Sigmoid colon (tissue), 7 donors: ENCODE measurements at regions of chr17 and their contacts with region 1.

Region 1: GRCh38 chr17:50297407-50297865 is 23.2 kb downstream of the TMEM92 start:
- DNase-seq: peak; percentile 91
- H3K4me3 ChIP-seq: no peak overlapping the region
- H3K27ac ChIP-seq: no peak overlapping the region
- H3K4me1 ChIP-seq: peaks cover 0 to 3% (median 2%) of the 10 kb centered on the region in 4 donors
- H3K27me3 ChIP-seq: no peaks in the 10 kb centered on the region
- CTCF ChIP-seq: peak; percentile 95 to 98 (median 96)
- EP300 ChIP-seq: no peak
- POLR2A ChIP-seq: no peak

Region 2: DNA sequence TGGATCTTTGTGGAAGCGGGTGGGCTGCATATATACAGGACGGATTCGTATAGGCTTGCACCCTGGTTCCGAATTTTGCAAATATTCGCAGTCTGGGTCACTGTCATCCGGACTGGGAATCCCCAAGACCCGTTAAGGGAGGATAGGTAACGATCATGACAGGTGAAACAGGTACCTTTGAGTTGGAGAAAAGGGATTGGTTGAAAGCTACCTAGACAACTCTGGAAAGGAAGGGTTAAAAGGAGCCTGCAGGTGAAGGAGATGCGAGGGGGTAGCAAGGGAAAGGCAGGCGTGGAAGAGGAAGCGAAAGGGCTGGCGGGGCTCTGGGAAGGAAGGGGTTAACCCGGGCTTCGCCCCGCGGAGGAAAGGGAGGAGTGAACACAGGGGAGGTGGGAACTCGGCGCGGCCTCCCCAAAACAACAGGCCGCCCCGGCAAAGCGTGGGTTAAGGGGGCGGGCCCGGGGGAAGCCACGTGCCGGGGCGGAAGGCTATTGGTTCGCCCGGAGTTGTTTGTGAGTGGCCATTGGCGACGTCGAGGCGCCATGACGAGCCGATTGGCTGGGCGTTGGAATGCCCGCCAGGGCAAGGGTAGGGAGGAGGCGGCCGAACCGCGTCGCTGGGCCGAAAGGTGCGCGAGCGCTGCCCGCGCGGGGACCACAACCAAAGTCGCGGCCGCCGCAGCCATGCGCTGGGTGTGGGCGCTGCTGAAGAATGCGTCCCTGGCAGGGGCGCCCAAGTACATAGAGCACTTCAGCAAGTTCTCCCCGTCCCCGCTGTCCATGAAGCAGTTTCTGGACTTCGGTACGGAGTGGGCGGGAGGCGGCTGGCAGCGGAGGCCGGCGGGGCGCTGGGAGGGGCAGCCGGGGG is 202.4 kb before region 1 on chr17 and contains the start of gene PDK2:
- intact Hi-C with region 1: loop called (anchors 2 kb)
- DNase-seq: peak; percentile 99
- H3K4me3 ChIP-seq: peak within 1 kb of the TSS; percentile 91 to 97 (median 94)
- H3K27ac ChIP-seq: peak within 1 kb of the TSS; percentile 91 to 96 (median 92)
- H3K4me1 ChIP-seq: peaks cover 0 to 38% (median 26%) of the 10 kb centered on the region in 4 donors
- H3K27me3 ChIP-seq: no peaks in the 10 kb centered on the region
- CTCF ChIP-seq: no peak
- EP300 ChIP-seq: peak in 1 of 4 donors; percentile 19
- POLR2A ChIP-seq: peak; percentile 51 to 69
- total RNA-seq, gene PDK2: 40.3 to 82.8 (median 45.7) TPM

Region 3: GRCh38 chr17:50114849-50115357 is 182.5 kb before region 1 on chr17:
- intact Hi-C with region 1: loop called (anchors 5 kb)
- DNase-seq: no peak
- H3K4me3 ChIP-seq: no peak overlapping the region
- H3K27ac ChIP-seq: no peak overlapping the region
- H3K4me1 ChIP-seq: peaks cover 0 to 51% (median 43%) of the 10 kb centered on the region in 4 donors
- H3K27me3 ChIP-seq: no peaks in the 10 kb centered on the region
- CTCF ChIP-seq: peak in 1 of 4 experiments; percentile 19
- EP300 ChIP-seq: no peak
- POLR2A ChIP-seq: no peak

Region 4: DNA sequence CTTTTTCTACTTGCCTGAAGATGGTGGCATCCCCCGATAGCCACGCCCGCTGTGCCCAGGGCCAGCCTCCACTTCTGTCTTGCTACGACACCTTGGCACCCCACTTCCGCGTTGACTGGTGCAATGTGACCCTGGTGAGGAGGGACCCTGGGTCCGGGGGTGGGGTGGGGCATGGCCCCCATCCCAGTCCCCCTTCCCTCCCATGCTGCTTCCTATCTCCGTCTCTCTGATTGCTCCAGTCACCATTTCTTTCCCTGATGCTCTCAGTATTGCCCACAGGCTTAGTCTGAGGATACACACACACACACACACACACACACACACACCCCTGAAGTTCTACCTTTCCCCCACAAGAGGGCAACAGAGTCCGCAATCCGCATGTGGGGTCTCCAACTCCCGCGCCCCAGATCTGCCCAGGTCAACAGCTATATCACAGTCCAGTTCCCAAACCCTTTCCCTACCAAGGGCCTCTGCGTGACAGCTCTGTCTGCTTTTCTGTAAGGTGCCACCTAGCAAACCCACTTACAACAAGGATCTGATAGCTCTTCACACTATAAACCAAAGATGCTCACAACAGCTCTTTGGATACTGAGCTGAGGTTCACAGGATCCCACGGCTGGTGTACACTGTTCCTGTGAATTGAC is 128.2 kb before region 1 on chr17:
- intact Hi-C with region 1: loop called (anchors 2 kb)
- DNase-seq: no peak
- H3K4me3 ChIP-seq: no peak overlapping the region
- H3K27ac ChIP-seq: peak overlapping the region in 3 of 4 donors; percentile 42 to 53 (median 43)
- H3K4me1 ChIP-seq: peaks cover 2 to 67% (median 60%) of the 10 kb centered on the region in 4 donors
- H3K27me3 ChIP-seq: no peaks in the 10 kb centered on the region
- CTCF ChIP-seq: peak; percentile 78 to 100 (median 98)
- EP300 ChIP-seq: no peak
- POLR2A ChIP-seq: no peak

Region 5: DNA sequence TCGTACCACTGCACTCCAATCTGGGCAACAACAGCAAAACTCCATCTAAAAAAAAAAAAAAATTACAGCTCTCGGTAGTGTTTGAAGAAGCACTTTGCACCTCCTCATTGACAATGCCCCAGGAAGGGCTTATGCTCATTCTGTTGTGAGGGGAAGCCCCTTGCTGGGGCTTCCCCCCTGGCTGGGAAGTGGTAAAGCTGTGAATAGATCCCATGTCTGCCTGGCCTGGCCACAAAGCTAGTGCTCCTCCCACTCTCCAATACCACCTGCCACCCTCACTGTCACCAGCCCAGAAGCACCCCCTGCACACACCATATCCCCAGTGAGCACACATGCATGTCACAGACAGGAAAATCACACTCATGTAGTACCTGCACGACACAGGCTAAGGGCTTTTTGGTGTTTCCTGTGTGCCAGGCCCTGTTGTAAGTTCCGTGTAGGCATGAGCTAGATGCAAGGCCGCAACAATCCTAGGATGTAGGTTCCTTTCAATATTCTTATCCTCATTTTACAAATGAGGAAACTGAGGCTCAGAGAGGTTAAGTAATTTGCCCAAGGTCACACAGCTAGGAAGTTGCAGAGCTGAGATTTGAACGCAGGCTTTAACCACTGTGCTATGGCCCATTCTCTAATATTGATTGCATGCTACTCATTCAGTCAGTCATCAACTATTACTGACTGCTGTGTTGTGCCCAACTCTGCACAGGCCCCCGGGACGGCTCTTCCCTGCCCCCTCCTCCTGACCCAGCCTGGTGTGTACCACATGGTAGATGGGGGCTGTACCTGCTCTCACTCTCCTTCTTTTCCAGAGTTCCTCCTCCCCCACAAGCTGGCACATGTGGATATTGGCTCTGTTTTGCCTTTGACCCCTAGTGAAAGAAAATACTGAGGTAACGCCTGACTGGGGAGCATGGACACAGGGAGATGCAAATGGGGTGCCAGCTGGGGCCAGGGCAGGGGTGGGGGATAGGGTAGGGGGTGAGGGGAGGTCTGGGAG is 84.1 kb before region 1 on chr17:
- intact Hi-C with region 1: no loop called
- DNase-seq: no peak
- H3K4me3 ChIP-seq: no peak overlapping the region
- H3K27ac ChIP-seq: peak overlapping the region; percentile 89 to 99 (median 96)
- H3K4me1 ChIP-seq: peaks cover 0 to 69% (median 60%) of the 10 kb centered on the region in 4 donors
- H3K27me3 ChIP-seq: no peaks in the 10 kb centered on the region
- CTCF ChIP-seq: no peak
- EP300 ChIP-seq: no peak
- POLR2A ChIP-seq: no peak